ENCODE measurements at regions of chr2 and their contacts with region 1.

Region 1: DNA sequence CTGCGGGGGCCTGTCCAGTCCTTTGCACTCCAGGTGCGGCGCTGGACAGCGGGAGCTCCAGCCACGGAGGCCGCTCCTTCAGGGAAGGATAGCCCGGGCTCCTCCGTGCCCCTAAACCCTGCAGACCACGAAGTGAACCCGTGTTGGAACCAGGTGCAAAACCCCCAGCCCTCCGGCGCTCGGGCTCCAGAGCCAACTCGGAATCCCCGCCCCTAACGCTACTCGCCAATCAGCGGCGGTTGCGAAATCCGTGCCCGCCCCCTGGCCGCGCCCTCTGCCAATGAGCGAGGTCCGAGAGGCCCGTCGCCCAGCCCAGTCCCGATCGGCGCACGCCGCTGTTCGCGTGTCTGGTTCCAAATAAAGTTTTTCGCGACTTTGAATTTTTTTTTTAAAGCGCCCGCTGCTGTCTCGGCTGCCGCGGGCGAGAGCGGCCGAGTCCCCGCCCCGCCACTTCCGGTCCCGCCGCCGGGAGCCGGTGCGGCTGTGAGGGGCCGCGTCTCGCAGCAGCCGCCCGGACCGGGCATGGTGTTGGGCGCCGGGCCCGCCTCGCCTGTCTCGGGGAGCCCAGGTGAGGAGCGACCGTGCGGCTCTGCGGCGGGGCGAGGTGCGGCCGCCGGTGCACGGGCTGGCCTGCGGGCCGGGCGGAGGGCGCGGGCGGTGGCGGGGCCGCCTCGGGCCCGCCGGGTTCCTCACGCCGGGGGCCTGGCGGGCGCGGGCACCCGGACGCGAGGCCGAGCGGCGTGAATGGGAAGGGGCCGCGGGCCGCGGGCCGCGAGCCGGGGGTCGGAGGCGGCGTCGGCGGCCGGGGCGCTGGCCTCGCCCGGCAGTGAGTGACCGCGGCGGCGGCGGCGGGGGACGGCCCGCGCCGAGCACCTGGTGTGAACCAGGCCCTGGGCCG is at the start of gene UBE2F:
- DNase-seq: peak; percentile 94 to 98 (median 96)
- ATAC-seq: peak; percentile 94
- H3K4me3 ChIP-seq: peak within 1 kb of the TSS; percentile 86
- H3K4me3 Mint-ChIP-seq: peak within 1 kb of the TSS; percentile 91
- H3K27ac ChIP-seq: peak within 1 kb of the TSS; percentile 14 to 58
- H3K27ac Mint-ChIP-seq: peak within 1 kb of the TSS; percentile 86
- H3K4me1 ChIP-seq: peaks cover 45% of the 10 kb centered on the region
- H3K4me1 Mint-ChIP-seq: peaks cover 36% of the 10 kb centered on the region
- H3K27me3 ChIP-seq: no peaks in the 10 kb centered on the region
- H3K27me3 Mint-ChIP-seq: no peaks in the 10 kb centered on the region
- CTCF ChIP-seq: no peak
- total RNA-seq, gene UBE2F: 23.2 to 27.4 TPM

Region 2: DNA sequence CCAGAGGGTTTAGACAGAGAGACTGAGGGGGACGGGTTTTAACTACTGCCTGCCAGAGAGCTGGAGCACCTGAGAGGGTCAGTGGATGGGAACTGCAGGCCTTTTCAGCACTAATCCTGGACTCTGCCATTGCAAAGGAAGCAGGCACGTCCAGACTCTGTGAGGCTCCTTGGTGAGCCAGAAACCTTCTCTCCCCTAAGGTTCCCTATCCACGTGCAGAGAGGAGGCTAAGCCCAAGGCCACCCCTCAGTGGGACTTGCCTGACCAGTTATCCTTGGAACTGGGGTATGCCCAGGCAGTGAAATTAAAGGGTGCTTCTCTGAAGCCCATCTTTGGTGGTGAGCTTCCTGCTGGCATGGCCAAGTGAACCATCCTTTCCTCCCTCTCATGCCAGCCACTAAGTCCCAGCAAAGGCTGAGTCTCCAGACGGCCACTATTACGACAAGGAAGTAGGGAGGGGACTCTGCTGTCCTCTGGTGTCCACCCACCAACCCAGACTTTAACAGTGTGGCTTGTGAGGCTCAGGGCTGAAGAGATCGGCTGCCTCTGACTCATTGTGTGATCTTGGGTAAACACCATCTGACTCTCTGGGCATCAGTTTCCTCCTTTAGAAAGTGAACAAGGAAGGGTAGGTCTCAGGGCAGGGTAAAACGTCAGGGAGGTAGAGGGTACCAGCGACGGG is 483.6 kb before region 1 on chr2:
- CTCF ChIA-PET with region 1: no interaction called
- POLR2A ChIA-PET with region 1: no interaction called
- intact Hi-C with region 1: no loop called
- DNase-seq: no peak
- ATAC-seq: no peak
- H3K4me3 ChIP-seq: no peak overlapping the region
- H3K4me3 Mint-ChIP-seq: no peak overlapping the region
- H3K27ac ChIP-seq: no peak overlapping the region
- H3K27ac Mint-ChIP-seq: no peak overlapping the region
- H3K4me1 ChIP-seq: peaks cover 4% of the 10 kb centered on the region
- H3K4me1 Mint-ChIP-seq: peaks cover 3% of the 10 kb centered on the region
- H3K27me3 ChIP-seq: peaks cover 28 to 30% of the 10 kb centered on the region in 2 experiments
- H3K27me3 Mint-ChIP-seq: peaks cover 47% of the 10 kb centered on the region
- CTCF ChIP-seq: no peak

Region 3: DNA sequence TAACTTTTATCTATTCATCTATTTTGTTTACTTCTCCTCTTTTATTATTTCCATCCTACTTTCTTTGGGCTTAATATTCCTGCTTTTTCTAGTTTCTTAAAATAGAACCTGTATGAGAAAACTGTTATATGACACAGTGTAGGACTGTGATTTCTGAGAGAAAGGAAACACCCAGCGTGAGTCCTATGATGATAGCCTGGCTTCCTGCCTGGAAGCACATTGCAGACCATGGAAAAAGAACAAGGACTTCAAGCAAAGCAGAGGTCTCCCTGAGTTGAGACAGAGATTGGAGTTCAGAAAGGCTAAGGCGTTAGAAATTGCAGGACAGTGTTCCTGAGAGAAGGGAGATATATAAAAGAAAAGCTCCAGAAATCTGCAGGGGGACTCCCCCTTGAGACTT is 160.5 kb before region 1 on chr2:
- CTCF ChIA-PET with region 1: no interaction called
- POLR2A ChIA-PET with region 1: no interaction called
- intact Hi-C with region 1: no loop called
- DNase-seq: no peak
- ATAC-seq: no peak
- H3K4me3 ChIP-seq: no peak overlapping the region
- H3K4me3 Mint-ChIP-seq: no peak overlapping the region
- H3K27ac ChIP-seq: no peak overlapping the region
- H3K27ac Mint-ChIP-seq: no peak overlapping the region
- H3K4me1 ChIP-seq: no peaks in the 10 kb centered on the region
- H3K4me1 Mint-ChIP-seq: no peaks in the 10 kb centered on the region
- H3K27me3 ChIP-seq: no peaks in the 10 kb centered on the region
- H3K27me3 Mint-ChIP-seq: no peaks in the 10 kb centered on the region
- CTCF ChIP-seq: no peak

Region 4: DNA sequence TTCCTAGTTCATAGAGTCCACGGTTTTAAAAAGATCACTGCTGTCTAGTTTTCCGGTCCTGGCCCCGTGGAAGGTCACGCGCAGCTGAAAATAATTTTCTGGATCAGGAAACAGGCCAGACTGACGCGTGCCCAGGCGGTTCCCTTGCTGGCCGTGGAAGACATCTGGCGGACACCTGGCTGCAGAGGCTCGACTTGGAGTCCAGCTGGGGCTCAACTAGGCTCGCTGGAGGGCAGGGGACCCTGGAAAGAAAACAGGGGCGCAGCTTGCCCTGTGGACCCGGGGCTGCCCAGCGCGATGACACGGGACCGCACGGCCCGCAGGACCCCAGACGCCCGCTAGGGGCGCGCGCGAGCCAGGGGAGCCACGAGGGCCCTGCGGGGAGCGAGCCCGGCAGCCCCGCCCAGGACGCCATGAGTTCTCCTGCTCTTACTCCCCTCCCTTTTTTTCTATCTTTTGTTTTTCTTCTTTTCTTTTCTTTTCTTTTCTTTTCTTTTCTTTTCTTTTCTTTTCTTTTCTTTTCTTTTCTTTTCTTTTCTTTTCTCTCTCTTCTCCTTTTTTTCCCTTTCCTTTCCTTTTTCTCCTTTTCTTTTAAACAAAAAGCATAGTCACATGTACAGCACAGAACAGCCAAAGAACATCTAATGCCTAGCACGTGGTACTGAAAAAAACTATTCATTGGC is 43.2 kb before region 1 on chr2:
- CTCF ChIA-PET with region 1: no interaction called
- POLR2A ChIA-PET with region 1: interaction called, 5 read pairs
- intact Hi-C with region 1: loop called in 1 of 2 experiments (anchors 1 kb)
- DNase-seq: peak; percentile 38 to 91 (median 77)
- ATAC-seq: peak; percentile 99
- H3K4me3 ChIP-seq: peak overlapping the region; percentile 50
- H3K4me3 Mint-ChIP-seq: peak overlapping the region; percentile 54
- H3K27ac ChIP-seq: no peak overlapping the region
- H3K27ac Mint-ChIP-seq: no peak overlapping the region
- H3K4me1 ChIP-seq: peaks cover 20% of the 10 kb centered on the region
- H3K4me1 Mint-ChIP-seq: peaks cover 14% of the 10 kb centered on the region
- H3K27me3 ChIP-seq: no peaks in the 10 kb centered on the region
- H3K27me3 Mint-ChIP-seq: no peaks in the 10 kb centered on the region
- CTCF ChIP-seq: peak; percentile 94

Region 5: GRCh38 chr2:238060542-238061314 is 93.9 kb after region 1 on chr2 and contains the start of gene SCLY:
- CTCF ChIA-PET with region 1: no interaction called
- POLR2A ChIA-PET with region 1: no interaction called
- intact Hi-C with region 1: loop called in 1 of 2 experiments (anchors 1 kb)
- DNase-seq: peak; percentile 92 to 99 (median 96)
- ATAC-seq: peak; percentile 97
- H3K4me3 ChIP-seq: peak within 1 kb of the TSS; percentile 93
- H3K4me3 Mint-ChIP-seq: peak within 1 kb of the TSS; percentile 85
- H3K27ac ChIP-seq: peak within 1 kb of the TSS; percentile 77 to 81
- H3K27ac Mint-ChIP-seq: peak within 1 kb of the TSS; percentile 67
- H3K4me1 ChIP-seq: peaks cover 21% of the 10 kb centered on the region
- H3K4me1 Mint-ChIP-seq: peaks cover 35% of the 10 kb centered on the region
- H3K27me3 ChIP-seq: no peaks in the 10 kb centered on the region
- H3K27me3 Mint-ChIP-seq: peaks cover 17% of the 10 kb centered on the region
- CTCF ChIP-seq: no peak
- total RNA-seq, gene SCLY: 8.9 to 9.6 TPM

Region 6: GRCh38 chr2:238239872-238240751 is 273.3 kb after region 1 on chr2 and contains the start of gene HES6:
- CTCF ChIA-PET with region 1: no interaction called
- POLR2A ChIA-PET with region 1: interaction called, 3 read pairs
- intact Hi-C with region 1: loop called in 1 of 2 experiments (anchors 10 kb)
- DNase-seq: peak; percentile 33 to 90 (median 63)
- ATAC-seq: peak; percentile 78
- H3K4me3 ChIP-seq: peak within 1 kb of the TSS; percentile 57
- H3K4me3 Mint-ChIP-seq: peak within 1 kb of the TSS; percentile 92
- H3K27ac ChIP-seq: no peak within 1 kb of the TSS
- H3K27ac Mint-ChIP-seq: no peak within 1 kb of the TSS
- H3K4me1 ChIP-seq: peaks cover 20% of the 10 kb centered on the region
- H3K4me1 Mint-ChIP-seq: peaks cover 12% of the 10 kb centered on the region
- H3K27me3 ChIP-seq: peaks cover 13 to 20% of the 10 kb centered on the region in 2 experiments
- H3K27me3 Mint-ChIP-seq: peaks cover 30% of the 10 kb centered on the region
- CTCF ChIP-seq: no peak
- total RNA-seq, gene HES6: 1.5 to 1.9 TPM

Region 7: GRCh38 chr2:238288650-238289573 is 322.1 kb after region 1 on chr2:
- CTCF ChIA-PET with region 1: no interaction called
- POLR2A ChIA-PET with region 1: no interaction called
- intact Hi-C with region 1: loop called in 1 of 2 experiments (anchors 2 kb)
- DNase-seq: peak; percentile 95 to 99 (median 97)
- ATAC-seq: peak; percentile 89
- H3K4me3 ChIP-seq: peak overlapping the region; percentile 97
- H3K4me3 Mint-ChIP-seq: peak overlapping the region; percentile 99
- H3K27ac ChIP-seq: peak overlapping the region; percentile 51 to 81
- H3K27ac Mint-ChIP-seq: peak overlapping the region; percentile 99
- H3K4me1 ChIP-seq: peaks cover 38% of the 10 kb centered on the region
- H3K4me1 Mint-ChIP-seq: peaks cover 36% of the 10 kb centered on the region
- H3K27me3 ChIP-seq: no peaks in the 10 kb centered on the region
- H3K27me3 Mint-ChIP-seq: no peaks in the 10 kb centered on the region
- CTCF ChIP-seq: no peak